Esophagus muscularis mucosa (tissue), 4 donors: ENCODE measurements at regions of chr7 and their contacts with region 1.

Region 1: DNA sequence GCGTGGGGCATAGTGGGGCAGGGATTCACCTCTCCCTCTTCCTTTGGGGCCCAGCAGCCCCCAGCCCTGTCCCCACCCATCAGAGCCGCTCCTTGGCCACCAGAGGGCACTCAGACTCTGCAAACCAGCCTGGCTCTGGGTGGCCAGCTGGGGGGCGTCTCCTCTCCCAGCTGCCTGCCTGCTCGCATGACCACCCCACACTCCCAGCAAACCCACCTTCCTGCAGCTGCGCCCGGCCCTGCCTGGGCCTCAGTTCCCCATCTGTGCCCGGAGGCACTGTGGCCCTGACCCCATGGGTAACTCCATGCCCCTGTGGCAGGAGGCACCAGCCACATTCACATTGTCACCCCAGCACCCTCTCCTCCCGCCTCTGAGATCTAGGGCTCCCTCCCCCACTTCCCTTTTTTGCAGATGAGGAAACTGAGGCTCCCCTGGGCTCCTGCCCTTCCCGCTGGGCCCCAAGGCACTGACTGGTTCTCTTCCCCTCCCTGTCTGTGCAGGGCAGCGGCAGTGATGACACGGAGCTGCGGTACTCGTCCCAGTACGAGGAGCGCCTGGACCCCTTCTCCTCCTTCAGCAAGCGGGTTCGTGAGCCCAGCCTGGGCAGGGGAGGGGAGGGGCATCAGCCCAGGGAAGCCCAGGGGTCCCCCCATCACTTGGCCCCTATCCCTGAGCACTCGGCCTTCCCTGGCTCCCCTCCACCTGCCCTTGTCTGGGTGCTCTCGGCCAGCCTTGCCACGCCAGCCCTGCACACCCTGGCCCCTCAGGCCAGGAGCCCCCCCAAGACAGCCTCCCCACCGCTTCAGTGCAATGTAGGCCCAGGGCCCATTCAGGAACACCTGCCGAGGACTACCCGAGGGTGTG is 6.9 kb upstream of the SH2B2 start:
- DNase-seq: no peak
- H3K4me3 ChIP-seq: no peak overlapping the region
- H3K27ac ChIP-seq: no peak overlapping the region
- H3K4me1 ChIP-seq: peaks cover 0 to 8% (median 4%) of the 10 kb centered on the region in 4 donors
- H3K27me3 ChIP-seq: no peaks in the 10 kb centered on the region
- CTCF ChIP-seq: peak; percentile 73 to 83 (median 82)
- EP300 ChIP-seq: no peak
- POLR2A ChIP-seq: no peak

Region 2: GRCh38 chr7:102390697-102391484 is 111.1 kb after region 1 on chr7:
- intact Hi-C with region 1: loop called (anchors 2 kb)
- DNase-seq: peak; percentile 93
- H3K4me3 ChIP-seq: no peak overlapping the region
- H3K27ac ChIP-seq: no peak overlapping the region
- H3K4me1 ChIP-seq: peaks cover 0 to 7% (median 5%) of the 10 kb centered on the region in 4 donors
- H3K27me3 ChIP-seq: no peaks in the 10 kb centered on the region
- CTCF ChIP-seq: peak; percentile 87 to 95 (median 90)
- EP300 ChIP-seq: no peak
- POLR2A ChIP-seq: no peak